ENCODE measurements at regions of chr19 and their contacts with region 1.

Region 1: DNA sequence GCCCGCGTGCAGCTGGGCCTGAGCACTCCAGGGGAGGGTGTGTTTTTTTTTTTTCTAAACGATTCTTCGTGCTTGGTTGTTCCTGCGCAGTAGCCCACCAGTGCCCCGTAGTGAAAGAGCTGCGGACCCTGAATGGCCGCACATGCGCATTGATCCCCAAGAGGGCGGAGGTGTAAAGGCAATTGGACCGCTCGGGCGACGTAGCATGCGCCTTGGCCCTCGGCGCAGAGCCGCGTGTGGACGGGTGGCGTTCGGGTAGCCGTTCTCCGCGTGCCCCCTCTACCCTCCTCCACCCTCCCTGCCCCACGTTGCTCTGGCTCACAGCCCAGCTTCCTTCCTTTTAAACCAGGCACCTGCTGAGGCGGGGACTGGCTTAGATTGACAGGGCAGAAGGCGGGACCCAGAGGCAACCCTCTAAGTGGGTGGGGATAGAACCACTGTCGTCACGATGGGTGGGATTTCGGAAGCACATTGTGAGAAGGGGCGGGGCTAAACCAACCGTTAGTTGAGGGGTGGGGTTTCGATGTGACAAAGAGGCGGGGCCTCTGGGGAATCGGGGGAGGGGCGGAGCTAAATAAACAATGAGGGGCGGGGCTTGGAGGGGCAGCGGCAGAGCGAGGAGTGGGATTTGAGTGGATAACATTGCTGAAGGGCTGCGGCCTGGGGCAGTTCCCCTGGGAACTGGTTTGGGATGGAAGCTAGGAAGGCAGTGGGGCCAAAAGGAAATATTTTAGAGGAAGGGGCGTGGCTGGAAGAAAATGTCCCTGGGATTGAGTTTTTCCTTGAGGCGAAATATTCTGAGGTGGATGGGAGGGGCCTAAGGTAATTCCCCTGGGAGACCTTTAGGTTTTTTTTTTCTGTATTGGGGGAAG is 543 bp upstream of the NUP62 start:
- DNase-seq: peak; percentile 97

Region 2: GRCh38 chr19:49894879-49895565 is 34.8 kb before region 1 on chr19:
- CTCF ChIA-PET with region 1: no interaction called
- POLR2A ChIA-PET with region 1: interaction called, 15 read pairs
- DNase-seq: no peak

Region 3: DNA sequence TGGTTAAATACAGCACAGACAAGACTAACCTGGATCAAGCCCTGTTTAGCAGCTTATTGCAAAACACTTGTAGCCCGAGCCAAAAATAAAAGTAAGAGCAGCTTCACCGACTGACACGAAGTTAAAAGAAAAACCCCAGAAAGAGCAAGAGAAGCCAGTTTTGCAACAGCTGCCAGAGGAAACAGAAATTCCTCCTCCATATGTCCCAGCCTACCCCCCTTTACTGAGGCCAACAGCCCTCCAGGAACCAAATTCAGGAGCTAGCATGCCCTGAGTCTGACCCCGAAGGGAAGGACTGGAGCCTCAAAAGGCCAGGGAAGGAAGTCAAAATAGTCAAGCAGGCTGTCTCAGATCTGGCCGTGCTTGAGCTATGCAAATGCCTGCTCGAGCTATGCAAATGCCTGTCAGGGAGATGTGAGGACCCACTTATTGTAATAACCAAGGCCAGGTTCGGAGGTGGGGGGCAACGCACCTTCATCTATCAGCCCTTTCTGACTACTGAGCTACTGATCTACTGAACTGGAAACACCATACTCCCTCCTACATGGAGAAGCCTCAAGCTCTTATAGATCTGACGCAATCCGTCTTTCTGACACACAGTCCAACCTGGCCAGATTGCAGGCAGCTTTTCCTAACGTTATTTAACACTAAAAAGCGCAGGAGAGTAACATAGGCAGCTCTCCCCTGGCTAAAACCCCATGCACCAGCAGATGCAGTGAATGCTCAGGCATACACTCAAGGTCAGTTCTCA is 24.4 kb after region 1 on chr19:
- CTCF ChIA-PET with region 1: no interaction called
- POLR2A ChIA-PET with region 1: interaction called, 10 read pairs
- DNase-seq: no peak

Measured in HEK293T (cell line).